ENCODE measurements at regions of chr19 and their contacts with region 1.

Region 1: DNA sequence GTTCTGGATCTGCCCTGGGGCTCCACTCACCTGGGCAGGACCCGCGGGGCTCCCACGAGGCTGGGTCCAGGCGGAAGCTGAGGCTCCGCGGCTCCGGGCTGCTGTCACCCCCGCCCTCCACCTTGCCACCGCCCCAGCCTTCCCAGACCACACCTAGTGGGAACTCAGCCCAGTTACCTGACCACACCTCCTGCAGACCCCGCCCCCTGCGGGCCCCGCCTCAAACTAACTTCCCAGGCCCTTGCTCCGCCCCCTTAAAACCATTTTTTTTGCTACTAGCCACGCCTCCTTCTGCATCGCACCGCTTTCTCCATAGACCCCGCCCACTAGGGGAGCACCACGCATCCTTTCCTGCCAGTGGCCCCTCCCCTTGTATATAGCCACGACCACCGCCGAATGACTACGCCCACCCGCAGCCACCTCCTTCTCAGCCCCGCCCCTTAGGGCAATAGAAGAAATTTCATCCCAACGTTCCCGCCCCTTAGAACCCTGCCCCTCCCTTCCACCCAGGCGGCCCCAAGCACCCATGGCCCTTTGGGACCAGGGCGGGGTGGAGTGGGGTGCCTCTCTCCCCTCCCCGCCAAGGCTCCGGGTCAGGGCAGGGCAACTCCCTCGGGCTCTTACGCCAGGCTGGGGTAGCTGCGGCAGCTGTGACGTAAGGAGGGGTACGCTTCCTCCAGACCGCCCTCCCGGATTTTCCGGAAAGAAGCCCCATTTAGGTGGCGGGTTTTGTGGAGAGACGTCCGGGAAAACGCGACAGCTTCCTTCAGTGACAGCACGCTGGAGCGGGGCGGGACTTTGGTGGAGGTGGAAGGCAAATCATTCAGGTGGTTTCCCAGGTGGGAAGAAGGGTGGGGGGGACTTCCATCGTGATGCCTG is at the start of gene SH2D3A:
- DNase-seq: peak; percentile 92
- H3K4me3 Mint-ChIP-seq: peak within 1 kb of the TSS; percentile 89
- H3K27ac Mint-ChIP-seq: peak within 1 kb of the TSS; percentile 91
- H3K4me1 Mint-ChIP-seq: peaks cover 33% of the 10 kb centered on the region
- H3K27me3 Mint-ChIP-seq: no peaks in the 10 kb centered on the region
- total RNA-seq, gene SH2D3A: 7.7 and 8.7 TPM in 2 replicates

Region 2: DNA sequence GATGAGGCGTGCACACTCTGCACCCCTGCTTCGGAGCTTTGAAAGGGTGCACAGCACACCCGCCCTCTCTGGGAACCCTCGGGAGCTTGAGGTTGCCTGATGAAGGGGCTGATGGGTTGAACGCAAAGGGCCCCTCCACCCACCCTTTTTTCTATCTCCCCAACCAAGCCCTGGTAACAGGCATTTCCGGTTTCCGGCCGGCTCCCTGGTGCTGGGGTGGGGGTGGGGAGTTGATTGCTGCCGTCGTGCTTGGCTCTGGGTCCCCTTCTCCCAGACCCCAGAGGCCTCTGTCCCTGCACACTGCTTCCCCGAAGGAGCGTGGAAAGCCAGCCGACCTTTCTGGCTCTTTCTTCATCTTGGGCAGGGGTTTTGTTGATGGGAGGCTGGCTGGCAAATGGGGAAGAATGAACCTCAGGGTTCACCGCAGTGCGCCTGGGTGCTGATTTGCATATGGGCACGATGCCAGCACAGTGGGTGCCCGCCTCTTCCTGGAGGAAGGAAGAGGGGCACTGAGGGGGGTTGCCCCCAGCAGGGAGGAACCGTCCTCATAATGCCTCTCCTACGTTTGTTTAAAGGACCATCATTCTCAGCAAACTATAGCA is 34.0 kb after region 1 on chr19:
- intact Hi-C with region 1: loop called (anchors 1 kb)
- DNase-seq: peak; percentile 75
- H3K4me3 Mint-ChIP-seq: peak overlapping the region; percentile 85
- H3K27ac Mint-ChIP-seq: peak overlapping the region; percentile 97
- H3K4me1 Mint-ChIP-seq: peaks cover 46% of the 10 kb centered on the region
- H3K27me3 Mint-ChIP-seq: no peaks in the 10 kb centered on the region

Region 3: GRCh38 chr19:6811906-6812305 is 44.3 kb after region 1 on chr19:
- intact Hi-C with region 1: loop called (anchors 1 kb)
- DNase-seq: no peak
- H3K4me3 Mint-ChIP-seq: no peak overlapping the region
- H3K27ac Mint-ChIP-seq: no peak overlapping the region
- H3K4me1 Mint-ChIP-seq: peaks cover 37% of the 10 kb centered on the region
- H3K27me3 Mint-ChIP-seq: no peaks in the 10 kb centered on the region

Region 4: GRCh38 chr19:6925801-6926751 is 158.5 kb after region 1 on chr19:
- intact Hi-C with region 1: no loop called
- DNase-seq: peak; percentile 17
- H3K4me3 Mint-ChIP-seq: peak overlapping the region; percentile 72
- H3K27ac Mint-ChIP-seq: peak overlapping the region; percentile 51
- H3K4me1 Mint-ChIP-seq: peaks cover 11% of the 10 kb centered on the region
- H3K27me3 Mint-ChIP-seq: no peaks in the 10 kb centered on the region

Measured in activated T-helper 2 cell treated with anti-CD3 and anti-CD28 coated beads, Interferon-gamma antibody, Interleukin-2, Interleukin-4, amounts not matched to agents 10 μg/mL and 5 μg/mL and 100 μg/mL, durations not matched to agents 14 hours and 24 hours and 36 hours (primary cell).